Kidney (tissue), 22 donors: ENCODE measurements at regions of chr5 and their contacts with region 1.

Region 1: GRCh38 chr5:122076664-122077365 is 1.2 kb downstream of the LOX start:
- DNase-seq: peak; percentile 89 to 93 (median 93)
- H3K4me3 ChIP-seq: peak overlapping the region; percentile 40 to 71 (median 53)
- H3K27ac ChIP-seq: no peak overlapping the region
- H3K4me1 ChIP-seq: peaks cover 0 to 7% (median 0%) of the 10 kb centered on the region in 3 donors
- H3K27me3 ChIP-seq: no peaks in the 10 kb centered on the region
- CTCF ChIP-seq: peak; percentile 65

Region 2: GRCh38 chr5:121968910-121969607 is 107.8 kb before region 1 on chr5:
- intact Hi-C with region 1: loop called (anchors 10 kb)
- DNase-seq: peak in 2 of 5 donors; percentile 46 to 68
- H3K4me3 ChIP-seq: no peak overlapping the region
- H3K27ac ChIP-seq: no peak overlapping the region
- H3K4me1 ChIP-seq: peaks cover 0 to 6% (median 3%) of the 10 kb centered on the region in 3 donors
- H3K27me3 ChIP-seq: no peaks in the 10 kb centered on the region
- CTCF ChIP-seq: no peak